Right cardiac atrium (tissue), 5 donors: ENCODE measurements at regions of chr13 and their contacts with region 1.

Region 1: DNA sequence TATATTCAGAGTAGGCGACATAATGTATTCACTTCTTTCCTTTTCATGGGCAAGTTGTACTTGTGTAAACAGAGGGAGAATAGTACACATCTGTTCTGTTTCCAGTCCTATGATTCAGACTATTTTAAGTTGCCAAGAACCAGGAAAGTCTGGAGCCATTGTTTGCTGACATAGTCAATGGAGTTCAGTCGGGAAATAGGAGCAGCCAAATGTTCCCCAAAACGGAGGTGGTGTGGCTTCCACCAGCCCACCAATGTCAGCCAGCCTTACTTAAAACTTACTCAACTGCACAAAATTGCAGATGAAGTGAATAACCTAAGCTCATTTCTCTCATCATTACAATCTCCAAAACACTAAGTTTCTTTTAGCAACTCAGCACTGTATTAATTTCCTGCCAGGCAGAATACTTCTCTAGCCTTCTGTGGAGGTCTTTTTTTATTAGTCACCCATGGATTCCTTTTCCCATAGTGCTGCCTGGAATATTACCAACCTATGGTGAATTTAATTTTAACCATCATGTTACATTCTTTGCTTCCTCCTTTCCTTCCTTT is 22.3 kb upstream of the CSNK1A1L start:
- DNase-seq: peak; percentile 48 to 72 (median 72)
- ATAC-seq: peak; percentile 97 to 99
- H3K4me3 ChIP-seq: no peak overlapping the region
- H3K27ac ChIP-seq: peak overlapping the region; percentile 62
- H3K4me1 ChIP-seq: peaks cover 3% of the 10 kb centered on the region
- H3K27me3 ChIP-seq: no peaks in the 10 kb centered on the region

Region 2: GRCh38 chr13:37225414-37226070 is 97.8 kb after region 1 on chr13:
- intact Hi-C with region 1: loop called in 1 of 4 experiments (anchors 10 kb)
- DNase-seq: no peak
- ATAC-seq: peak; percentile 92 to 94
- H3K4me3 ChIP-seq: no peak overlapping the region
- H3K27ac ChIP-seq: no peak overlapping the region
- H3K4me1 ChIP-seq: no peaks in the 10 kb centered on the region
- H3K27me3 ChIP-seq: no peaks in the 10 kb centered on the region